Activated T-helper 1 cell treated with anti-CD3 and anti-CD28 coated beads, Interleukin-12 subunit alpha, Interleukin-12 subunit beta, Interleukin-2, Interleukin-4 antibody, amounts not matched to agents 30 ng/mL and 10 ng/mL and 1 ng/mL, durations not matched to agents 14 hours and 24 hours and 36 hours (primary cell): ENCODE measurements at regions of chr1 and their contacts with region 1.

Region 1: DNA sequence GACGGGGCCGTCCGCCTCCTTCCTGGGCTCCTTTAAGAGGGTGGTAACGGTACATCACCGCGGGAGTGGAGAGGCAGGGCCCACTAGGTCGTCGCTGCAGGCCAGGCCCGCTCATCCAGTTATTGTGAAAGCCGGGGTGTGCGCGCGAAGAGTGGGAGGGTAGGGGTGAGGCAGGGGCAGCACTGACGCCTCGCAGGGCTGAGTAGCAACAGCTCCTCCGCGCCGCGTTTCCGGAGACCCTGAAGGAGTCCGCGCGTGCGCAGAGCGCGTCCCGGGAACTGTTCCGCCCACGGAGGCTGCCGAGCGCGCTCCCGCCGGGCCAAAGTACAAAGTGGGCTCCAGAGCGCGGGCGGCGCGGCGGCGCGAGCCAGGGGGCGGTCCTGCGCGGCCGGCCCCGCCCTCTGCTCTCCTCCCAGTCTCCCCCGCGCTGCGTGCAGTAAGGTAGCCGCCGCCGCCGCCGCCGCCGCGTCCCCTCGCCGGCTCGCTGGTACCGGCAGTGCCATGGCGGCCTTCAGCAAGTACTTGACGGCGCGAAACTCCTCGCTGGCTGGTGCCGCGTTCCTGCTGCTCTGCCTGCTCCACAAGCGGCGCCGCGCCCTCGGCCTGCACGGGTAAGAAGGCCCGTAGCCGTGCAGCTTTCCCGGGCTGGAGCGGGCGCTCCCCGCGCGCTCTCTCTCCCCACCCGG is at the start of gene ABCD3:
- DNase-seq: peak; percentile 96
- H3K4me3 Mint-ChIP-seq: peak within 1 kb of the TSS; percentile 89
- H3K27ac Mint-ChIP-seq: peak within 1 kb of the TSS; percentile 68
- H3K4me1 Mint-ChIP-seq: peaks cover 31% of the 10 kb centered on the region
- H3K27me3 Mint-ChIP-seq: peaks cover 15% of the 10 kb centered on the region
- total RNA-seq, gene ABCD3: 25.7 and 28.2 TPM in 2 replicates

Region 2: DNA sequence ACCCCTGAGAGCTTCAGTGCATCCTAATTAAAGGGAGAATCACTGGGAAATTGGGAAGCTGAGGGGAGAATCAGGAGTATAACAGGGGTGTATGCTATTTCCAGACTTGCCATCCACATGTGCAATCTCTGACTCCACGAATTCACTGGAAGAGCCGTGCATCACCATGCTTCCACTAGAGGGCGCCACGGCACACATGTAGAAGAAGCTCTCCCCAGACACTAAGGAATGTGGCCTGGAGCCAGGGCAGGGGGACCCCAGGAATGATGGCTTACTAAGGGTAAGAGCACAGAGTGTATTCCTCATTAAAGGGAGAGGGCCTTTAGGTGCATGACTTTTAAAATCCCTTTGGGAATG is 378.6 kb before region 1 on chr1:
- intact Hi-C with region 1: loop called (anchors 2 kb)
- DNase-seq: peak; percentile 24
- H3K4me3 Mint-ChIP-seq: no peak overlapping the region
- H3K27ac Mint-ChIP-seq: no peak overlapping the region
- H3K4me1 Mint-ChIP-seq: peaks cover 24% of the 10 kb centered on the region
- H3K27me3 Mint-ChIP-seq: peaks cover 12% of the 10 kb centered on the region

Region 3: GRCh38 chr1:94247138-94248094 is 170.7 kb before region 1 on chr1:
- intact Hi-C with region 1: loop called (anchors 10 kb)
- DNase-seq: no peak
- H3K4me3 Mint-ChIP-seq: peak overlapping the region; percentile 66
- H3K27ac Mint-ChIP-seq: no peak overlapping the region
- H3K4me1 Mint-ChIP-seq: peaks cover 13% of the 10 kb centered on the region
- H3K27me3 Mint-ChIP-seq: peaks cover 62% of the 10 kb centered on the region

Region 4: DNA sequence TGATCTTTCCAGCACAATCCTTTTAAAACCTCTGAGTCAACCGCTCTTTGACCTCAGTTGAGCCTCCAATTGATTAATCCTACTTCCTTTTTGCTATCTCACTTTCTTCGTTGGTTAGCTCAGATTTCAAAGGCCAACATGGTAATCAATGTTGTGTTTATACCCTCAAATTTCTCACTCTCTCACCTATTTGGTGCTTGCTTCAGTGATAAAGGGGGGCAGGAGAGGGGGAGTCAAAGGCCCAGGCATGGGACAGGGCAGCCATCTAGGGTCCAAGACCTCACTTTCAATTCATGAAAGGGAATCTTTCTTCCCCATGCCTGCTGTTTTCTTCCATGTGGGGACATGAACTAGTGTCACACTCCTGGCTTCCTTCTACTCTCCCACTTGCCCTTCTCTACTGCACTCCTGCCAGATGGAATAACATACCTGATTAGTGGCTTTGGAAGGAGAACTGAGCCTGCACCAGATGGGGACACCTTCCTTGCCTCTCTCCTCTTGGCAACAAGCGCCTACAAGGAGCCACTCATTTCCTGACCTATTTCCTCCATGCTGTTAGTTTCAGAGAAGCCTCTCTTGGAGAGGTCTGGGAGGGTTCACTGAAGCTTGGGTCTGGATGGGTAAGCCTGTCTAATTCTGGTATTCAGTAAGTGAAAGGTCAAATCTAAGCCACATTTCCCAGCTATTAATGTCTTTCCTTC is 107.4 kb before region 1 on chr1:
- intact Hi-C with region 1: no loop called
- DNase-seq: no peak
- H3K4me3 Mint-ChIP-seq: no peak overlapping the region
- H3K27ac Mint-ChIP-seq: no peak overlapping the region
- H3K4me1 Mint-ChIP-seq: no peaks in the 10 kb centered on the region
- H3K27me3 Mint-ChIP-seq: peaks cover 4% of the 10 kb centered on the region

Region 5: DNA sequence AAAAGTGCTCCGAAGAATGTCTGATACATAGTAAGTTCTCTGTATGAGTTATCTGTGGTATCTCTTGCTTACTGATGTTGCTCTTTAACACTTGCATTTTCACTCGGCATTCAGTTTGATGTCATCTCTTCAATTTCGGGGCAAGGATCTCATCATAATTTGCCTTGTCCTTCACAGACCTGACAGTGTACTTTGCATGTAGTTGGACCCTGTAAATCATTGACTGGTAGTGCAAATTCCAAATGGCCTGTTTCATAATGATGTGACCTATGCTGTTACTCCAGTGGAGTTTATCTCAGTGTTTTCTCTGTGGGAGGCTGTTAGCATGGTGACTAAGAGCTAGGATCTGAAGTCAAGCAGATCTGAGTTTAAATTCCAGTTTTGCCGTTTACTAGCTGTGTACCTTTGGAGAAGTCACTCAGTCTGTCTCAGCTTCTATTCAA is 34.1 kb before region 1 on chr1:
- intact Hi-C with region 1: loop called (anchors 1 kb)
- DNase-seq: no peak
- H3K4me3 Mint-ChIP-seq: peak overlapping the region; percentile 17
- H3K27ac Mint-ChIP-seq: peak overlapping the region; percentile 59
- H3K4me1 Mint-ChIP-seq: peaks cover 25% of the 10 kb centered on the region
- H3K27me3 Mint-ChIP-seq: peaks cover 2% of the 10 kb centered on the region

Region 6: DNA sequence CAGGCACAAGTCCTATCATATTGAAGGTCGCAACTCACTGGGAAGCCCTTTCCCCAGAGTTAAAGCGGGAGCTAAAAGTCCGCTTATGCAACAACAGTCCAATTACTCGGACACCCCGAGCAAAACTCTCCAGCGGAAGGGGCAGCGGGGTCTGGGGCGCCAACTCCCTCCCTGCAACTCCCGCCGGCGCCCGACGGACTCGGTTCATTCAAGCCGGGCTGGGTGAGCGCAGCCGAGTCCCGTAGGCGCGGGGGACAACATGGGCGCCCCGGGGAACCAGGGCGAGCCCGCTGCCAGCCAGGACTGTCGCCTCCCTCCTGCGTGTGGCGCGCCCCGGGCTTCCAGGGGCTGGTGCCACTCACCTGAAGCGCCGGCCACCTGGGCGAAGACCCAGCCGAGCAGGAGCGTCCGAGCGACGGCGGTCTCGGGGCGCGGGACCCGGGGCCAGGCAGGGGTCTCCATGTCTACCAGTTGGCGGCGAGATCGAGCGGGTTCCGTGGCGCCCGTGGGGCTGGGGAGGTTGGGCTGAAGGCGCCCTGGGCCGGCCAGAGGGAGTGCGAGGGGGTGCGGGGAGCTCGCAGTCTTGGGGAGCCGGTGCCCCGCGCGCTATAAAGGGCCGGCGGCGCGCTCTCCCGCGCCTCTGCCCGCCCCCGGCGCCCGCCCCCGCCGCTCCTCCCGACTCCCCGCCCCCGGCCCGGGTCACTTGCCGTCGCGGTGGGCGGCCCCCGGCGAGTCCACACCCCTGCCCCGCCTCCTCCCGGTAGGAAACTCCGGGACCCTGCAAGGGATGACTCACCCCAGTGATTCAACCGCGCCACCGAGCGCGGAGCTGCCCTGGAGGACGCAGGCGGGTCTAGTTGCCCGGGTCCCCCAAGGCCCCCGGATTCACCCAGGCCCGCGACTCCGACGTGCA is 123.3 kb after region 1 on chr1 and contains the start of gene F3:
- intact Hi-C with region 1: loop called (anchors 1 kb)
- DNase-seq: peak; percentile 68
- H3K4me3 Mint-ChIP-seq: peak within 1 kb of the TSS; percentile 86
- H3K27ac Mint-ChIP-seq: peak within 1 kb of the TSS; percentile 33
- H3K4me1 Mint-ChIP-seq: peaks cover 20% of the 10 kb centered on the region
- H3K27me3 Mint-ChIP-seq: peaks cover 79% of the 10 kb centered on the region
- total RNA-seq, gene F3: 0.16 and 0.32 TPM in 2 replicates

Region 7: GRCh38 chr1:94739521-94740061 is 321.5 kb after region 1 on chr1:
- intact Hi-C with region 1: no loop called
- DNase-seq: no peak
- H3K4me3 Mint-ChIP-seq: no peak overlapping the region
- H3K27ac Mint-ChIP-seq: no peak overlapping the region
- H3K4me1 Mint-ChIP-seq: peaks cover 32% of the 10 kb centered on the region
- H3K27me3 Mint-ChIP-seq: peaks cover 8% of the 10 kb centered on the region